SK-N-SH (cell line): ENCODE measurements at regions of chr16 and their contacts with region 1.

Region 1: GRCh38 chr16:12067714-12068401 is 91.3 kb downstream of the SNX29 start:
- DNase-seq: peak; percentile 74
- H3K4me3 ChIP-seq: no peak overlapping the region; a peak in 1 of 4 replicates
- H3K27ac ChIP-seq: no peak overlapping the region
- H3K4me1 ChIP-seq: 0 out of 4 replicates have a peak, but pooled peaks cover 0 to under 1% of the 10 kb centered on the region in 2 experiments
- H3K27me3 ChIP-seq: no peaks in the 10 kb centered on the region
- CTCF ChIP-seq: peak; percentile 94
- EP300 ChIP-seq: no peak
- RAD21 ChIP-seq: peak; percentile 98

Region 2: DNA sequence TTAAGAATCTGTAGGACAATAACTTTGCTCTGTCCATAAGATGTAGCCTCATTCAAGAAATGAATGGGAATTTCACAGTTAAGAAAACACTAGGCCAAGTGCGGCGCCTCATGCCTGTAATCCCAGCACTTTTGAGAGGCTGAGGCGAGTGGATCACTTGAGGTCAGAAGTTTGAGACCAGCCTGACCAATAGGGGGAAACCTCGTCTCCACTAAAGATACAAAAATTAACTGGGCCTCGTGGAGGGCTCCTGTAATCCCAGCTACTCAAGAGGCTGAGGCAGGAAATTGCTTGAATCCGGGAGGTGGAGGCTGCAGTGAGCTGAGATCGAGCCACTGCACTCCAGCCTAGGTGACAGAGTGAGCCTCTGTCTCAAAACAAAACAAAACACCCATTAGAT is 196.7 kb before region 1 on chr16:
- CTCF ChIA-PET with region 1: interaction called, 12 read pairs
- POLR2A ChIA-PET with region 1: no interaction called
- DNase-seq: no peak
- H3K4me3 ChIP-seq: no peak overlapping the region
- H3K27ac ChIP-seq: peak overlapping the region in 1 of 2 experiments; percentile 7; a peak in 1 of 4 replicates
- H3K4me1 ChIP-seq: peaks cover 0 to 20% of the 10 kb centered on the region in 2 experiments; a peak in 2 of 4 replicates
- H3K27me3 ChIP-seq: no peaks in the 10 kb centered on the region
- CTCF ChIP-seq: peak; percentile 40
- EP300 ChIP-seq: no peak
- RAD21 ChIP-seq: no peak

Region 3: DNA sequence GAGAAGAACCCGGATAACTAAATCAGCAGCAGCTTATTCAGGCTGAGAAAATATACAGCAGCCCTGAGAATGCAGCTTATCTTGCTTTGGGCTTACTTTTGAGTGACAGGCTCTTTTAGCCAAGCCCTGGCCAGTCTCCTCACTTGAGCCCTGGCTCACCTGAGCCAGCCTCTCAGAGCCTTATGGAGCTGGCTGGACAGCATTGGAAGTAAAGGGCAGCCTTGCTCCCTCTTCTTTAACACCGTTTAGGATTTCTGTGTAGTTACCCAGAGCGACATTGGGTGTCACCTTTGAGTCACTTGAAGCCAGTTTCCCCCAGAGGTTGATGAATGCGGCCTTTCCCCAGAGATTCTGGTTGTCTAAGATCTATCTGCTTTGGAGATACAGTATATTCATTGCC is 118.3 kb before region 1 on chr16:
- CTCF ChIA-PET with region 1: interaction called, 66 read pairs
- POLR2A ChIA-PET with region 1: interaction called, 4 read pairs
- DNase-seq: peak; percentile 68
- H3K4me3 ChIP-seq: no peak overlapping the region
- H3K27ac ChIP-seq: no peak overlapping the region
- H3K4me1 ChIP-seq: no peaks in the 10 kb centered on the region
- H3K27me3 ChIP-seq: no peaks in the 10 kb centered on the region
- CTCF ChIP-seq: peak; percentile 65
- EP300 ChIP-seq: no peak
- RAD21 ChIP-seq: peak; percentile 86

Region 4: GRCh38 chr16:11964761-11965551 is 102.9 kb before region 1 on chr16 and contains the start of gene TNFRSF17:
- CTCF ChIA-PET with region 1: interaction called, 28 read pairs
- POLR2A ChIA-PET with region 1: no interaction called
- DNase-seq: no peak
- H3K4me3 ChIP-seq: no peak within 1 kb of the TSS
- H3K27ac ChIP-seq: no peak within 1 kb of the TSS
- H3K4me1 ChIP-seq: no peaks in the 10 kb centered on the region
- H3K27me3 ChIP-seq: no peaks in the 10 kb centered on the region
- CTCF ChIP-seq: no peak
- EP300 ChIP-seq: no peak
- RAD21 ChIP-seq: no peak
- polyA plus RNA-seq, gene TNFRSF17: 0.08 TPM in 1 of 2 replicates, not detected in the other

Region 5: DNA sequence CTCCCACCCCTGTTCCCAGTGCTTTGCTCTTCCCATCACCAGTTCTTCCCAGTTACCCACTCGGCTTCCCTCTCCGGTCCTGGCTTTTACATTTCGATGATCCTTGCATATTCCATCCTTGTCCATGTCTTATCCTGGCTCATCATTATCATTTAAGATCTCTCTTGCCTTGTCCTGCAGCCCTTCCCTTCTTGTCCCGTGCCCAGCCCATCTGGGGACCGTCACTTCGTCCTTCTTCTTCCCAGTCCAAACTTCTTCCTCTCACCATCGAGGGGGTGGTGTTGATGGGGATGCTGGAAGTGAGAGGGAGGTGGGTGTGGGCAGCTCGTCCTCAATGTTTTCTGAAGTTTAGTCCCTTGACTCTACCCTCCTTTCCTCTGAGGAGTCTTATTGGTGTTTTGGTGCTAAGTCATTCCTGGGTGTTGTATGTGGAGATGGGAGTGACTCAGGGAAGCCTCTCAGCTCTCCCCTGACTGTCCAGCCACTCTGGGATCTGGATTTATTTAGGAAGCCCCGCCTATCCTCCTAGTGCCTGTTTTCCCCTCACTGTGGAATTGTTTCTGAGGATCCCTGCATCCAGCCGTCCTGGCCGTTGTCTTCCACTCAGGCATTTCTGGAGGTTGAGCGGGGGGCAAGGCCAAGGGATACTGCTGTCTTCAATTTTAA is 90.3 kb before region 1 on chr16:
- CTCF ChIA-PET with region 1: interaction called, 27 read pairs
- POLR2A ChIA-PET with region 1: no interaction called
- DNase-seq: peak; percentile 51
- H3K4me3 ChIP-seq: peak overlapping the region; percentile 61 to 84
- H3K27ac ChIP-seq: peak overlapping the region; percentile 31 to 88; a peak in 3 of 4 replicates
- H3K4me1 ChIP-seq: peaks cover 0 to 9% of the 10 kb centered on the region in 2 experiments; a peak in 1 of 4 replicates
- H3K27me3 ChIP-seq: no peaks in the 10 kb centered on the region
- CTCF ChIP-seq: no peak
- EP300 ChIP-seq: no peak
- RAD21 ChIP-seq: no peak

Region 6: GRCh38 chr16:12024449-12024848 is 43.4 kb before region 1 on chr16:
- CTCF ChIA-PET with region 1: interaction called, 13 read pairs
- POLR2A ChIA-PET with region 1: no interaction called
- DNase-seq: no peak
- H3K4me3 ChIP-seq: no peak overlapping the region
- H3K27ac ChIP-seq: no peak overlapping the region
- H3K4me1 ChIP-seq: peaks cover 0 to 13% of the 10 kb centered on the region in 2 experiments; a peak in 2 of 4 replicates
- H3K27me3 ChIP-seq: no peaks in the 10 kb centered on the region
- CTCF ChIP-seq: no peak
- EP300 ChIP-seq: no peak
- RAD21 ChIP-seq: no peak

Region 7: GRCh38 chr16:12079412-12079965 is 11.6 kb after region 1 on chr16:
- CTCF ChIA-PET with region 1: interaction called, 36 read pairs
- POLR2A ChIA-PET with region 1: no interaction called
- DNase-seq: no peak
- H3K4me3 ChIP-seq: no peak overlapping the region
- H3K27ac ChIP-seq: no peak overlapping the region
- H3K4me1 ChIP-seq: no peaks in the 10 kb centered on the region
- H3K27me3 ChIP-seq: no peaks in the 10 kb centered on the region
- CTCF ChIP-seq: no peak
- EP300 ChIP-seq: no peak
- RAD21 ChIP-seq: no peak